ENCODE measurements at regions of chr12 and their contacts with region 1.

Region 1: DNA sequence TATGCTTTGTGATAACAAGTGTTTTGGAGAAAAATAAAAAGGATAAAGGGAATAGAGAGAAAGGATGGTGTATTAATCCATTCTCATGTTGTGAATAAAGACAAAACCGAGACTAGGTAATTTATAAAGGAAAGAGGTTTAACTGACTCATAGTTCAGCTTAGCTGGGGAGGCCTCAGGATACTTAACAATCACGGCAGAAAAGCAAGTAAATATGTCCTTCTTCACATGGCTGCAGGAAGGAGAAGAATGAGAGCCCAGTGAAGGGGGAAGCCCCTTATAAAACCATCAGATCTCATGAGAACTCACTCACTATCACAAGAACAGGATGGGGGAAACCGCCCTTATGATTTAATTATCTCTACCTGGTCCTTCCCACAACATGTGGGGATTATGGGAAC is 18.1 kb upstream of the C12orf42 start:
- DNase-seq: no peak
- H3K4me3 Mint-ChIP-seq: no peak overlapping the region
- H3K27ac Mint-ChIP-seq: no peak overlapping the region
- H3K4me1 Mint-ChIP-seq: peaks cover 8% of the 10 kb centered on the region
- H3K27me3 Mint-ChIP-seq: peaks cover 5% of the 10 kb centered on the region

Region 2: DNA sequence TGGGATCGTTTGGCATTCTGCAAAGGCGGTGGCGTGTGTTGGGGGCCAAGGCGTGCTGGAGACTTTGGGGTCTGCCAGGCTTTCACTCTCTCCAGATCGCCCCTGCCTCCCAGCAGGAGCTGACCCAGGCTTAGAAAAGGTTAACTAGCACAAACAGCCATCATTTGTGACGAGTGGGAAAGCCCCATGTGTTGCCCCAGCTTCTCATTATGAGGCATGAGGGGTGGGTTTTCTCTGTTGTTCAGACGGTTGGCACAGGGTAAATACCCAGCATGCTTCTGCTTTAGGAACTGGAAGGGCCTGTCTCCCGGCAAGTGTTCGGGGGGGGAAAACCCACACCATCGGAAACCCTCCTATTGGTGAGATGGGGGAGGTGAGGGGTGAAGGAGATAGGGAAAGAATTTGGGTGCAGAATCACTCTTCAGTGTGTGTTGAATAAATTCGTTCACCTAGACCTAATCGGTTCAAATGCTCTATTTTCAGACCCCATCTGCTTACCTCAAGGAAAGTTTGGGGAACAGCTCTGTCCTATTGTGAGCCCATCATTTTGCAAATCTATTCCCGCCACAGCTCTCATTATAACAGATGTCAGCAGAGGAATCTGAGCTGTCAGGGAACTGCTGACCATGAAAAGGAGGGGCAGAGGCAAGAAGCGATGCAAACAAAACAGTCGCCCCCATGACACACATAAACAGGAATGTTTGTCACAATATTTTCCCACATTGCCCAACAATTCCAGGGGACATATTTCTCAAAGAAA is 16.6 kb after region 1 on chr12:
- CTCF ChIA-PET with region 1: no interaction called
- intact Hi-C with region 1: loop called (anchors 2 kb)
- DNase-seq: peak; percentile 34
- H3K4me3 Mint-ChIP-seq: no peak overlapping the region
- H3K27ac Mint-ChIP-seq: no peak overlapping the region
- H3K4me1 Mint-ChIP-seq: peaks cover 7% of the 10 kb centered on the region
- H3K27me3 Mint-ChIP-seq: peaks cover 3% of the 10 kb centered on the region